Cardiac septum (tissue), 1 donor: ENCODE measurements at regions of chr1 and their contacts with region 1.

Region 1: GRCh38 chr1:67430352-67431155 is at the start of gene SERBP1:
- DNase-seq: peak; percentile 98
- total RNA-seq, gene SERBP1: 146 TPM

Region 2: GRCh38 chr1:66924756-66925557 is 505.6 kb before region 1 on chr1 and contains the starts of genes DNAI4 and MIER1:
- intact Hi-C with region 1: loop called (anchors 2 kb)
- DNase-seq: peak; percentile 99
- total RNA-seq, gene DNAI4: 10.9 TPM
- total RNA-seq, gene MIER1: 27.8 TPM

Region 3: GRCh38 chr1:67041841-67042503 is 388.6 kb before region 1 on chr1:
- intact Hi-C with region 1: loop called (anchors 10 kb)
- DNase-seq: no peak

Region 4: GRCh38 chr1:67460676-67461500 is 30.3 kb after region 1 on chr1:
- intact Hi-C with region 1: loop called (anchors 2 kb)
- DNase-seq: no peak

Region 5: DNA sequence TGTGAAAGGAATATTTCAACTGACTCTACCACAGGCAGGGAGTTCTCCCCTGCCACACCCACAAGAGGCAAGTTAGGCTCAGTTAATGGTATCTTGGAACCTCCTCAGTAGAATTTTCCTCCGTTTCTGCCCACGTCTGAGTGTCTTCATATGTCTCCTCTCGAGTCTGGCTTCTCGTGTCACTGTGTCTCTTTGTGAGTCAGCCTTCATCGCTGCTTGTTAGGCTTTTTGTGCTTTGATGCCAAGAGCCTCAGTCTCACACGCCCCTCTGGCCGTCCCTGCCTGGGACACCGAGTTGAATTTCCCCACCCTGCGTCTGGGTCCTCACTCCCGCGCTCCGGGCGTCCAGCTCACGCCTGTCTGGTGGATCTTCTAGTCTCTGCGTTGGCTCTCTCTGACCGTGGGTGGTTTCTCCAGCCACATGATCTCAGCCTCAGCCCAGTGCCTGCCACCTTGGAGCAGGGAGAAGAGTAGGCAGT is 128.7 kb after region 1 on chr1:
- intact Hi-C with region 1: no loop called
- DNase-seq: no peak

Region 6: DNA sequence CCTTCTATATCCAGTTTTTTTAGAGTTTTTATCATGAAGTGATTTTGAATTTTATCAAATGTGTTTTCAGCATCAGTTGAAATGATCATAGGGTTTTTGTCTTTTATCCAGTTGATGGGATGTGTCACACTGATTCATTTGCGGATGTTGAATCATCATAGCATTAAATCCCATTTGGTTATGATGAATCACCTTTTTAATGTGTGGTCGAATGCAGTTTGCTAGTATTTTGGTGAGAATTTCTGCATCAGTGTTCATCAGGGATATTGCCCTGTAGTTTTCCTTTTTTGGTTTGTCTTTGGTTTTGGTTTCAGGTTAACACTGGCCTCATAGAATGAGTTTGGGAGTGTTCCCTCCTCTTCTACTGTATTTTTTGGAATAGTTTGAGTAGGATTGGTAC is 539.5 kb after region 1 on chr1:
- intact Hi-C with region 1: no loop called
- DNase-seq: no peak